ENCODE measurements at regions of chr17 and their contacts with region 1.

Region 1: GRCh38 chr17:56960596-56961538 is at the start of gene COIL:
- DNase-seq: peak; percentile 97
- ATAC-seq: peak; percentile 98
- H3K4me3 Mint-ChIP-seq: peak within 1 kb of the TSS; percentile 78
- H3K27ac Mint-ChIP-seq: peak within 1 kb of the TSS; percentile 81
- H3K4me1 Mint-ChIP-seq: peaks cover 23% of the 10 kb centered on the region
- H3K27me3 Mint-ChIP-seq: no peaks in the 10 kb centered on the region
- total RNA-seq, gene COIL: 20.9 to 21.3 TPM

Region 2: GRCh38 chr17:56779898-56780733 is 180.8 kb before region 1 on chr17:
- CTCF ChIA-PET with region 1: no interaction called
- POLR2A ChIA-PET with region 1: no interaction called
- intact Hi-C with region 1: loop called in 1 of 2 experiments (anchors 1 kb)
- DNase-seq: peak; percentile 93
- ATAC-seq: peak; percentile 95
- H3K4me3 Mint-ChIP-seq: peak overlapping the region; percentile 77
- H3K27ac Mint-ChIP-seq: peak overlapping the region; percentile 91
- H3K4me1 Mint-ChIP-seq: peaks cover 24% of the 10 kb centered on the region
- H3K27me3 Mint-ChIP-seq: peaks cover 1% of the 10 kb centered on the region

Region 3: DNA sequence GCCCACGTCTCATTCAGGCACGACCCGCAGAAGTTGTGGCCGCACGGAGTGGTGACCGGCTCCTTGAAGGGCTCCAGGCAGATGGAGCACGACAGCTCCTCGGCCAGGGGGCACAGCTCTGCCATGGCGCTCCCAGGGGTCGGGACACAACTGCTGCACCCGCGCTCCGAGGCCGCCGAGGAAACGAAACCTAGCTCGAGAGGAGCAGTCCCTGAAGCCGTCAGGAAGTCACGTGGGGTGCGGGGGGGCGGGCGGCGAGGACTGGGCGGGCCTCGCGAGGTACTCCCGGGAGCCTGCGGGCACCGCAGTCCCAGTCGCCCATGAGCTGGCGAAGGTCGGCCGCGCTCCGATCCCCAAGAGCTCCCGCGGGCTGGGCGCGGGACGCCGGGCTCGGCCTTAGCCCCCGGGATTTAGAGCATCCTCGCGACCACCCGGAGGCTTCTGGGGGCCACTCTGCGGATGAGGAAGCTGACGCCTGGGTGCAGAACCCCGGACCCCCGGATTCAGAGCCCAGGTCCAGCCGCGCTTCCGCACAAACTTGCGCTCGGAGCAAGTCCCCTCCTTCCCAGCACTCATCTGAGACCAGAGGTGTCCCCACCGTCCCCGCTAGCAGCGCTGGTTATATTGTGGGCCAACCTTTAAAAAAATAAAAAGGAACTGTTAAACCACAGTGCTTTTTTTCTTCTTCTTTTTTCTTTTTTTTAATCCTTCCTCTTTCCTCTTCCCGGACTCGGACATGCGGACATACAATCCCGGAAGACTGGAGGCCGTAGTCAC is 46.8 kb before region 1 on chr17 and contains the start of gene TRIM25:
- CTCF ChIA-PET with region 1: interaction called, 4 read pairs
- POLR2A ChIA-PET with region 1: no interaction called
- intact Hi-C with region 1: loop called in 1 of 2 experiments (anchors 1 kb)
- DNase-seq: peak; percentile 97
- ATAC-seq: peak; percentile 66
- H3K4me3 Mint-ChIP-seq: peak within 1 kb of the TSS; percentile 90
- H3K27ac Mint-ChIP-seq: peak within 1 kb of the TSS; percentile 95
- H3K4me1 Mint-ChIP-seq: peaks cover 61% of the 10 kb centered on the region
- H3K27me3 Mint-ChIP-seq: no peaks in the 10 kb centered on the region
- total RNA-seq, gene TRIM25: 173 to 241 TPM

Region 4: DNA sequence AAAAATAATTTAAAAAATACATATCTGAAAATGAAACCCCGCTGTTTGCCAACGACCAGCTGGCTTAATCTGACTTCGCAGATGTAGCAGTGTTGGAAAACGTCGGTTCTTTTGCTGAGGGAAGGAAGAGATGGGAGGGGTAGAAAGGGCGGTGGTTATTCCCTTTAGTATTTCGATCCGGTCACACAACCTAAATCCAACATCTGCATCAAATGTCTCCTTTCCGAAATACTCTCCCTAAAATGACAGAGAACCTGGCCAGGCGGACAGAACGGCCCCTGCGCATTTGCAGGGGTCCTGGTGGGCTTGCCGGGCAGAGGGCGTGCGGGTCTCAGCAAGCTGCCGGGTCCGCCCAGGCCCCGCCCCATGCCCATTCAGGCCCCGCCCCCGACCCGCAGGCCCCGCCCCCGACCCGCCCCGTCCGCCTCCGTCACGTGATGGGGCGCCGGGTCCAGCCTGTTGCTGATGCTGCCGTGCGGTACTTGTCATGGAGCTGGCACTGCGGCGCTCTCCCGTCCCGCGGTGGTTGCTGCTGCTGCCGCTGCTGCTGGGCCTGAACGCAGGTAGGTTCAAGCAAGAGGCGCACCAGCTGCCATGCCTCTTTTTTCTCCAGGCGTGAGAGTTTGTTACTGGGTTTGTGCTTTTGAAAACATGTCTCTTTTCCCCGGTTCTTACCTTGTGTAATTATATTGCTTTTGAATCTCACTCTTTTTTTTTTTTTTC is 17.0 kb after region 1 on chr17 and contains the start of gene SCPEP1:
- CTCF ChIA-PET with region 1: interaction called, 5 read pairs
- POLR2A ChIA-PET with region 1: interaction called, 6 read pairs
- intact Hi-C with region 1: loop called (anchors 1 kb)
- DNase-seq: peak; percentile 90
- ATAC-seq: peak; percentile 96
- H3K4me3 Mint-ChIP-seq: peak within 1 kb of the TSS; percentile 83
- H3K27ac Mint-ChIP-seq: peak within 1 kb of the TSS; percentile 74
- H3K4me1 Mint-ChIP-seq: peaks cover 18% of the 10 kb centered on the region
- H3K27me3 Mint-ChIP-seq: peaks cover 3% of the 10 kb centered on the region
- total RNA-seq, gene SCPEP1: 9.7 to 14.8 TPM

Region 5: GRCh38 chr17:57084802-57085447 is 124.1 kb after region 1 on chr17 and contains the start of gene AKAP1:
- CTCF ChIA-PET with region 1: no interaction called
- POLR2A ChIA-PET with region 1: no interaction called
- intact Hi-C with region 1: loop called in 1 of 2 experiments (anchors 1 kb)
- DNase-seq: peak; percentile 97
- ATAC-seq: peak; percentile 96
- H3K4me3 Mint-ChIP-seq: peak within 1 kb of the TSS; percentile 81
- H3K27ac Mint-ChIP-seq: peak within 1 kb of the TSS; percentile 87
- H3K4me1 Mint-ChIP-seq: peaks cover 44% of the 10 kb centered on the region
- H3K27me3 Mint-ChIP-seq: no peaks in the 10 kb centered on the region
- total RNA-seq, gene AKAP1: 27.0 to 29.8 TPM

Measured in activated CD4-positive, alpha-beta T cell treated with anti-CD3 and anti-CD28 coated beads for 36 hours (primary cell).